ENCODE measurements at regions of chr6 and their contacts with region 1.

Region 1: GRCh38 chr6:15058190-15059061 is 187.4 kb upstream of the JARID2 start:
- DNase-seq: no peak
- ATAC-seq: no peak
- H3K4me3 ChIP-seq: no peak overlapping the region
- H3K27ac ChIP-seq: no peak overlapping the region
- H3K4me1 ChIP-seq: peaks cover 0 to 25% (median 9%) of the 10 kb centered on the region in 9 donors
- H3K27me3 ChIP-seq: no peaks in the 10 kb centered on the region
- CTCF ChIP-seq: no peak

Region 2: GRCh38 chr6:15090745-15091384 is 32.4 kb after region 1 on chr6:
- intact Hi-C with region 1: loop called in 1 of 10 experiments (anchors 1 kb)
- DNase-seq: no peak
- ATAC-seq: no peak
- H3K4me3 ChIP-seq: no peak overlapping the region
- H3K27ac ChIP-seq: peak overlapping the region in 1 of 10 donors; percentile 73
- H3K4me1 ChIP-seq: peaks cover 0 to 40% (median 0%) of the 10 kb centered on the region in 9 donors
- H3K27me3 ChIP-seq: no peaks in the 10 kb centered on the region
- CTCF ChIP-seq: no peak

Region 3: DNA sequence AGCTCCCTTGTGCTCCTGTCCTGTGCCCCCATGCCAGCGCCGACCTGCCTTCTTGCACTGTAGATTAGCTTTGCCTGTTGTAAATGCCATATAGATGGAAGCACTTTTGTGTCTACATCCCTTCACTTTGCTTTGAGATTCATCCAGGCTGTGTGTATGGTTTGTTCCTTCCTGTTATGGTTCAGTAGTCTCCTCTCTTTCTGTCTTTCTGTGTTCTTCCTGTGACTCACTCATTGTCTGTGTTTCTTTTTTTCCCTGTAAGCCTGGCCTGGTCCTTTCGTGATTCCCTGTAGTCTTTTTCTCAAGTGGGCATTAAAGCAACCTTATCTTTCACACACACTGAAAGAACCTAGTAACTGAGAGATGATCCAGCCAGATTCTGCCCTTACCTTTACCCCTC is 254.1 kb after region 1 on chr6:
- intact Hi-C with region 1: no loop called
- DNase-seq: no peak
- ATAC-seq: no peak
- H3K4me3 ChIP-seq: no peak overlapping the region
- H3K27ac ChIP-seq: peak overlapping the region in 2 of 10 donors; percentile 6 to 34
- H3K4me1 ChIP-seq: peaks cover 9 to 81% (median 68%) of the 10 kb centered on the region in 9 donors
- H3K27me3 ChIP-seq: no peaks in the 10 kb centered on the region
- CTCF ChIP-seq: no peak

Measured in heart right ventricle (tissue), 16 donors.